K562 (cell line): ENCODE measurements at regions of chr3 and their contacts with region 1.

Region 1: GRCh38 chr3:45751537-45752242 is 44.6 kb downstream of the SLC6A20 start:
- DNase-seq: no peak
- ATAC-seq: no peak
- H3K4me3 ChIP-seq: no peak overlapping the region
- H3K27ac ChIP-seq: no peak overlapping the region
- H3K4me1 ChIP-seq: no peaks in the 10 kb centered on the region; a peak in 1 of 5 replicates
- H3K27me3 ChIP-seq: peaks cover 18 to 34% of the 10 kb centered on the region in 2 experiments
- CTCF ChIP-seq: no peak
- EP300 ChIP-seq: no peak
- POLR2A ChIP-seq: no peak
- RAD21 ChIP-seq: no peak

Region 2: GRCh38 chr3:45783667-45784066 is 32.0 kb after region 1 on chr3:
- CTCF ChIA-PET with region 1: no interaction called
- POLR2A ChIA-PET with region 1: no interaction called
- in situ Hi-C with region 1: no loop called
- intact Hi-C with region 1: no loop called
- DNase-seq: no peak
- ATAC-seq: peak; percentile 41; the same call in 1 of the 3 replicates
- H3K4me3 ChIP-seq: no peak overlapping the region
- H3K27ac ChIP-seq: no peak overlapping the region
- H3K4me1 ChIP-seq: peaks cover 0 to 6% of the 10 kb centered on the region in 2 experiments; a peak in 1 of 5 replicates
- H3K27me3 ChIP-seq: peaks cover 26 to 54% of the 10 kb centered on the region in 2 experiments
- CTCF ChIP-seq: peak in 1 of 3 experiments; percentile 21; a peak in 1 of 6 replicates
- EP300 ChIP-seq: no peak
- POLR2A ChIP-seq: no peak
- RAD21 ChIP-seq: peak in 1 of 2 experiments; percentile 18; a peak in 2 of 4 replicates

Region 3: GRCh38 chr3:45890405-45890804 is 138.7 kb after region 1 on chr3:
- CTCF ChIA-PET with region 1: no interaction called
- POLR2A ChIA-PET with region 1: no interaction called
- in situ Hi-C with region 1: no loop called
- intact Hi-C with region 1: no loop called
- DNase-seq: peak in 1 of 4 experiments; percentile 37
- ATAC-seq: no peak
- H3K4me3 ChIP-seq: no peak overlapping the region
- H3K27ac ChIP-seq: no peak overlapping the region
- H3K4me1 ChIP-seq: no peaks in the 10 kb centered on the region; a peak in 1 of 5 replicates
- H3K27me3 ChIP-seq: peaks cover 7 to 11% of the 10 kb centered on the region in 2 experiments; a peak in 4 of 5 replicates
- CTCF ChIP-seq: no peak
- EP300 ChIP-seq: no peak
- POLR2A ChIP-seq: no peak
- RAD21 ChIP-seq: no peak

Region 4: GRCh38 chr3:45906681-45907407 is 155.2 kb after region 1 on chr3:
- CTCF ChIA-PET with region 1: no interaction called
- POLR2A ChIA-PET with region 1: no interaction called
- in situ Hi-C with region 1: no loop called
- intact Hi-C with region 1: no loop called
- DNase-seq: peak; percentile 40 to 60 (median 51)
- ATAC-seq: peak; percentile 90
- H3K4me3 ChIP-seq: no peak overlapping the region
- H3K27ac ChIP-seq: no peak overlapping the region
- H3K4me1 ChIP-seq: peaks cover 0 to 3% of the 10 kb centered on the region in 2 experiments; a peak in 3 of 5 replicates
- H3K27me3 ChIP-seq: peaks cover 5 to 59% of the 10 kb centered on the region in 2 experiments
- CTCF ChIP-seq: peak; percentile 80 to 90 (median 86)
- EP300 ChIP-seq: no peak
- POLR2A ChIP-seq: no peak
- RAD21 ChIP-seq: peak; percentile 55 to 77

Region 5: DNA sequence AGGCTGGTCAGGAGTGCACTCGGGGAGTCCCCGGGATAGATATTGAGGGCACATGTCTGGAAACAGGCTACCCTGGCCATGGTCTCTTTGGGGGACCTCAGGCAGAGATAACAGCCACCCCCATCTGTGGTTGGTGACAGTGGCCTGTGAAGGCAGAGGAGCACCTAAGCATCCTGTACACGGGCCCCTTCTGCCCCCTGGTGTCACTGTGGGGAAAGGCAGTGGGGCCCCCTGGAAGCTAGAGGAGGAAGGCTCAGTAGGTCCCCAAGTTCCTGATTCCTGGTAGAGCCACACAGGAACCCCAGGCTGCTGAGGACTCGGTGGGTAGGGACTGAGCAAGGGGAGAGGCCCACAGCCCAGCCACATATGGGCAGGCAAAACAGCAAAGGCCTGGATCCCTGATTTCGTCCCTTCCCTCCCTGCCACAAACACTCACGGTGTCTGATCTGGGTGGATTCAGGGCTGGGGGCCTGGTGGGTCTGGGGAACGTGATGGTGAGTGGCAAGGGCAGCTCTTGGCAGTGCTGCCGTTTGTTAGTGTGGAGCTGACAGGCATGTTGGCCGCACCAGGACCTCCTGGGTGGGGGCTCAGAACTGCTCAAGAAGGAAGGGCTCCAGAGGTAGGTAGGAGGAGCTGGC is 177.5 kb after region 1 on chr3:
- CTCF ChIA-PET with region 1: no interaction called
- POLR2A ChIA-PET with region 1: interaction called, 5 read pairs
- in situ Hi-C with region 1: loop called (anchors 5 kb)
- intact Hi-C with region 1: no loop called
- DNase-seq: peak; percentile 70 to 85 (median 80)
- ATAC-seq: peak; percentile 99
- H3K4me3 ChIP-seq: no peak overlapping the region
- H3K27ac ChIP-seq: no peak overlapping the region
- H3K4me1 ChIP-seq: no peaks in the 10 kb centered on the region
- H3K27me3 ChIP-seq: no peaks in the 10 kb centered on the region
- CTCF ChIP-seq: peak; percentile 86 to 93 (median 91)
- EP300 ChIP-seq: no peak
- POLR2A ChIP-seq: no peak
- RAD21 ChIP-seq: peak; percentile 88 to 89

Region 6: DNA sequence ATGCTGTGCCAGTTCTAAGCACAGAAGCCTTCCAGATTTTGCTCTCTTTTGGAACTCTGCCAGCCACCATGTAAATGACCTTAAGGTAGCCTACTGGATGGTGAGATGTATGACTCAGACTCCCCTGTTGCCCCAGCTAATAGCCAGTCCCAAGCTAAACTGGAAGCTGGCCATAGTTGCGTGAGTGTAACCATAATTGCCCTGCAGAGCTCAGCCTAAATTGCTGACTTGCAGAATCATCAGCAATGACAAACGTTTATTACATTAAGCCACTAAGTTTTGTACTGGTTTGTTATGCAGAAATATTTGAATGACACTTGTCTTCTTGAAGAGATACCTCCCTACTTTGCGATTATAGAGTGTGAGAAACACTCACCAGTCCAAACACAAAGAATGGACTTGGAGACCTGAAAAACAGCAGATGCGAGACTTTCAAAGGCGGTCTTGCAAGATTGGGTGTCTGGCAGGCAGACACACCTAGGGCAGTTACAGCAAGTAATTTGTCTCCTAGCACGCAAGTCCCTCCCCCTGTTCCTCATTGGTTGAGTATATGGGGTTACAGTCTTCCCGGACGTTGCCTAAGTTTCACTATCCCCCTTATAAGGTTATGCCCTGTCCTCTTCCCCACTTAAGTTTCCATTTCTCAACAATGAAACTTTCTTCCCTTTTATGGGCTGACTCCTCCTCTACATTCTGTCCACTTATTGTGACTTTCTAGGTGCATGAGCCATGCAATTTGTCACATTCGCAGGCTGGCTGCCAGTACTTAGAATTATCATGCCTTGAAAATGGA is 359.2 kb after region 1 on chr3:
- CTCF ChIA-PET with region 1: no interaction called
- POLR2A ChIA-PET with region 1: no interaction called
- in situ Hi-C with region 1: no loop called
- intact Hi-C with region 1: no loop called
- DNase-seq: peak in 1 of 4 experiments; percentile 28
- ATAC-seq: peak; percentile 71
- H3K4me3 ChIP-seq: no peak overlapping the region
- H3K27ac ChIP-seq: no peak overlapping the region
- H3K4me1 ChIP-seq: no peaks in the 10 kb centered on the region
- H3K27me3 ChIP-seq: peaks cover 2 to 6% of the 10 kb centered on the region in 2 experiments; a peak in 4 of 5 replicates
- CTCF ChIP-seq: no peak
- EP300 ChIP-seq: no peak
- POLR2A ChIP-seq: no peak
- RAD21 ChIP-seq: no peak